Head of caudate nucleus (tissue), 42 donors: ENCODE measurements at regions of chr11 and their contacts with region 1.

Region 1: DNA sequence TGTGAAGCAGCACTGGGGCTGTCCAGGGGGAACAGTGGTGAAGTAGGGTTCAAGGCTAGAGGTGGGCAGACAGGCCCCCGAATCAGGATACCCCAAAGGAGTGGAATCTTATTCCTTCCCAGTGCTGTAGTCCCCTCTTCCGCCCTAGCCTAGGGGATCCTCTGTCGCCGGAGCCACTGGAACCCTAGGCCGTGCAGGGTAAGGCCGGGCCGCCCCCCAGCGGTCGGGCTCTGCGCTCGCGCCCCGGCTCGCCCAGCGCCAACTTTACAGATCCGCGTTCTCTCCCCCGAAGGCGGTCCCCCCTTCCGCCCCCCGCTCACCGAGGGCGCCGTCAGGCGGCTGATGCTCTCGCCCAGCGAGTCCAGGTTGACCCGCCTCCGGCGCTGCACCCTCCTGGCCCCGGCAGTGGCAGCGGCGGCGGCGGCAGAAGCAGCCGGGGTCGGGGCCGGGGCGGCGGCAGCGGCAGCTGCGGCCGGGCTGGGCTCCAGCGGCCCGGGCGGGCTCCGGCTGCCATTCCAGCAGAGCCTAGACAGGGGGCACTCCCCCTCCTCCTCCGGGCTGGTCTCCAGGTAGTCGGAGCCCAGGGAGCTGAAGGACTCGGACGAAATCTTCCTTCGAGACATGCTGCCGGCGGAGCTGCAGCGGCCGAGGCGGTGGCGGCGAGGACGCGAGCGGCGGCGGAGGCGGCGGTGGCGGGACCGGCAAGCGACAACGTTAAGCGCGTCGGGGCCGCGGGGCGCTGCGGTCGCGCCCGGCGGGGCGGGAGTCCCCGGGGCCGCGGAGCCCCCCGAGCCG is 646 bp downstream of the GUCY1A2 start:
- DNase-seq: peak; percentile 38 to 89 (median 78)

Region 2: GRCh38 chr11:106087815-106088435 is 929.7 kb before region 1 on chr11:
- intact Hi-C with region 1: loop called (anchors 10 kb)
- DNase-seq: peak; percentile 6 to 84 (median 65)

Region 3: GRCh38 chr11:106457727-106458126 is 559.9 kb before region 1 on chr11:
- intact Hi-C with region 1: no loop called
- DNase-seq: no peak

Region 4: DNA sequence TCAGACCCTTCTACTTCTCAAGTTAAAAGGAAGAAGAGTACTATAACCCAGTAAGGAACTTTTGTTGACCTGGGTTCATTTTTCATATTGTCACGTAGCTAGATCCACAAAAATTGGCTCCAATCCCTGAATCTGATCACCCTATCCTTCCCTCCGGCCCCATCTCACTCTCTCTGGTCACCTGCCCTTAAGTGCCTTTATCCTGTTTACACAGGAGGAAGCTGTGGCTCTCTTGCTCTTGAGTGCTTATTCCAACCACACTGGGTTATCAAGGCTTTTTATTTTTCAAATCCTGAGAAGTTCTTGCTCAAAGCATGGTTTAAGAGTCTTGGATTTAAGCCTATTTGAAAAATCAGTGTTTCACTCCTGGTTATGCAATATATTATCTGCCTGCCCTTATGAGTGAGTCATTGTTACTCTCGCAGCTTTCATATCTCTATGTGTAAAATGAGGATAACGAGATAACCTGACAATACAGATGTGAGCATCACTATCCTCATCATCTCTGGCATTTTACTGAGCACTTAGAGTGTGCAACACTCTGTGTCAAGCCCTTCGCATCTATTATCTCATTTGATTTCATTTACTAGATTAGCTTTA is 293.2 kb before region 1 on chr11:
- intact Hi-C with region 1: loop called (anchors 10 kb)
- DNase-seq: no peak